Naive thymus-derived CD8-positive, alpha-beta T cell (primary cell): ENCODE measurements at regions of chr10 and their contacts with region 1.

Region 1: DNA sequence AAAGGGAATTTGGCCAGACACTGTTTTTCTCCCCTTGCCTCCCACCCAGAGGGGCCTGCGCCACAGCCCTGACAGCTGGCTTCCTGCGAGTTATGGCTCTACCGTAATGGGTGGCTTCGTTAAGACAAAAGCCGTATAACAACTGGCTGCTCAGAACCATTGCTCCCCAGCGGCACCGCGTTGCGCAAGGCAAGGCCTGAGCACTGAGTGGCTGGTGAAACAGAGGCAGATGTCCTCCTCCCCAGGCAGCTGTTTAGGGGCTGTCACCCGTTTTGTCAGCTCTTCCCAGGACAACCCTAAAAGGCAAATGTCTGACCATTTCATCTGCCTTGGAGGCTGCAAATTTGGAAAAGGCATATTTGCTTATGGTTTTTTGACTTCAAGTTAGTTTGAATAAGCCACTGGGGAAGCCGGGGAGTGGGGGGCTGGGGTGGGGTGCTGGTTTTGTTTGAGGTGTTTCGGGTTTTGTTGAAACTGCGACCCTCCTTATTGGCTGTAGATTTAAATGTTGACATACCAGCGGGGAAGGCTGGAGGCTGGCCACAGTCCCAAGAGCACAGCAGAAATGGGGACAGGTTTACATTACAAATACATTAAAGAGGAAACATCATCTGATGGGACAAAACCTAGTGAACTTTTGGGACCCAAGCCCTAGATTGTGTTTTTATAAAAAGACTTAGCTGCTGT is 681 bp upstream of the SPOCK2 start:
- DNase-seq: peak in 7 of 10 donors; percentile 44 to 82 (median 62)
- ATAC-seq: peak; percentile 49 to 54
- H3K4me3 Mint-ChIP-seq: peak overlapping the region; percentile 93 to 100 (median 100)
- H3K27ac Mint-ChIP-seq: peak overlapping the region; percentile 97 to 100 (median 100)
- H3K4me1 Mint-ChIP-seq: peaks cover 31 to 55% (median 46%) of the 10 kb centered on the region in 4 donors
- H3K27me3 Mint-ChIP-seq: peaks cover 0 to 3% (median 0%) of the 10 kb centered on the region in 5 donors

Region 2: DNA sequence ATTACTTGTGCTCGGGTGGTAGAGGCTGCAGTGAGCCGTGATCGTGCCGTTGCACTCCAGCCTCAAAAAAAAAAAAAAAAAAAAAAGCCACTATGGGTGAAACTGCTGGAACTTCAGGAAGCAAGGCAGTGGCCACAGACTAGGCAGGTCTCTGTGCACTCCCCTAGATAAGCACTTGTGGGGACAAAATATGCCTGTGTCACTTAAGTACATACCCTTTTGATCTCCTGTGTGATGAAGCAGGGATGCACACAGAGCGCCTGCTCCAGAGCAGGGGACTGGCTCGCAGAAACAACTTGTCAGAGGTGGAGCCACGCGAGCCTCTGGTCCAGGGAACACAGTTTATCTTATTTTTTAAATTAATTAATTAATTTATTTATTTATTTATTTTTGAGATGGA is 195.1 kb before region 1 on chr10:
- POLR2A ChIA-PET with region 1: no interaction called
- DNase-seq: no peak
- ATAC-seq: no peak
- H3K4me3 Mint-ChIP-seq: no peak overlapping the region
- H3K27ac Mint-ChIP-seq: no peak overlapping the region
- H3K4me1 Mint-ChIP-seq: peaks cover 6 to 18% (median 16%) of the 10 kb centered on the region in 4 donors
- H3K27me3 Mint-ChIP-seq: peaks cover 0 to 5% (median 2%) of the 10 kb centered on the region in 5 donors

Region 3: DNA sequence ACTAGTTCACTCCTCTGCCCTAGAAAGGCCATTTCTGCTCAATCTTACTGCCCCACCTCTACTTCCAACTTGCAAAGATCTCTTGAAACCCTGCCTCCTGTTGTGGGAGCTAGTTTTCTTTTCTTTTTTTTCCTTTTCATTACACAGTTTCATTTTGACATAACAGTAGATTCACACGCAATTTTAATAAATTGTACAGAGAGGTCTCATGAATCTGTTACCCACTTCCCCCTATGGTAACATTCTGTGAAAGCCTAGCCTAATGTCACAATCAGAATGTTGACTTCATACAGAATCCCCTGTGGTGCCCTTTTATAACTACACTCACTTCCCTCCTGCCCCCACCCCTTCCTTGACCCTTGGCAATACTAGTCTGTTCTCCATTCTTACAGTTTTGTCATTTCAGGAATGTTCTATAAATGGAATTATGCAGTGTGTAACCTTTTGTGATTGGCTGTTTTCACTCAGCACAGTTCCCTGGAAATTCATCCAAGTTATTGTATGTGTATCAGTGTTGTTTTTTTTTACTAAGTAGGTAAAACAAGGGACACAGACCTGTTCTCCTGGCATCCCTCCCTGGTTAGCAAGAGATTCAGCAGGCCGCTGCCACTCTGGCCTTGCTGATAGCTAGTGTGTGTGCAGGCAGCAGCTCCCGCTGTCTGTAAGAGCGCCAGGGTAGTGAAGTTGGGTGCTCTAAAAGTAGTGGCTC is 103.3 kb before region 1 on chr10:
- POLR2A ChIA-PET with region 1: no interaction called
- DNase-seq: no peak
- ATAC-seq: no peak
- H3K4me3 Mint-ChIP-seq: no peak overlapping the region
- H3K27ac Mint-ChIP-seq: peak overlapping the region in 1 of 10 donors; percentile 23
- H3K4me1 Mint-ChIP-seq: peaks cover 0 to 11% (median 2%) of the 10 kb centered on the region in 4 donors
- H3K27me3 Mint-ChIP-seq: peaks cover 0 to 3% (median 0%) of the 10 kb centered on the region in 5 donors

Region 4: DNA sequence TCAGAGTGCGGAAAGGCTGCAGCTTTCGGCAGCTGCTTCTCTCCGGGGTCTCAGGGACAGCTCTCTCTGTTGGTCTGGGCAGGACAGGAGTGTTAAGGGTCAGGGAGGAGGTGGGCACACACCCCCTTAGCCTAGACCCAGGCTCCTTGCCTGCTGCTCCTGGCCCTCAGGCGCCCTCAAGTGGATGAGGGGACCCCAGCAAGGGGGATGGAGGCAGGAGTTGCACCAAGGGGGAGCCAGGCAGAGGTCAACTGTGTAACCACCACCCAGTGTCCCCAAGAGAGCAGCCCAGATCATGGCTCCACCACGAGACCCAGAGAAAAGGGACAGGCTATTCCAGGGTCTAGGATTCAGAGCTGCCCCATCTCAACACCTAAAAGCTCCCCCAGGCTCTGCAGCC is 27.5 kb before region 1 on chr10:
- POLR2A ChIA-PET with region 1: interaction called, 32 read pairs
- DNase-seq: peak in 2 of 10 donors; percentile 9 to 38
- ATAC-seq: peak; percentile 12 to 22
- H3K4me3 Mint-ChIP-seq: peak overlapping the region in 6 of 10 donors; percentile 23 to 75 (median 39)
- H3K27ac Mint-ChIP-seq: peak overlapping the region; percentile 76 to 98 (median 83)
- H3K4me1 Mint-ChIP-seq: peaks cover 34 to 68% (median 44%) of the 10 kb centered on the region in 4 donors
- H3K27me3 Mint-ChIP-seq: no peaks in the 10 kb centered on the region

Region 5: GRCh38 chr10:72107325-72108003 is 18.4 kb after region 1 on chr10:
- POLR2A ChIA-PET with region 1: interaction called, 208 read pairs
- DNase-seq: peak in 6 of 10 donors; percentile 37 to 76 (median 68)
- ATAC-seq: peak; percentile 66 to 90
- H3K4me3 Mint-ChIP-seq: peak overlapping the region; percentile 60 to 87 (median 75)
- H3K27ac Mint-ChIP-seq: peak overlapping the region; percentile 81 to 95 (median 90)
- H3K4me1 Mint-ChIP-seq: peaks cover 51 to 91% (median 88%) of the 10 kb centered on the region in 4 donors
- H3K27me3 Mint-ChIP-seq: no peaks in the 10 kb centered on the region

Region 6: DNA sequence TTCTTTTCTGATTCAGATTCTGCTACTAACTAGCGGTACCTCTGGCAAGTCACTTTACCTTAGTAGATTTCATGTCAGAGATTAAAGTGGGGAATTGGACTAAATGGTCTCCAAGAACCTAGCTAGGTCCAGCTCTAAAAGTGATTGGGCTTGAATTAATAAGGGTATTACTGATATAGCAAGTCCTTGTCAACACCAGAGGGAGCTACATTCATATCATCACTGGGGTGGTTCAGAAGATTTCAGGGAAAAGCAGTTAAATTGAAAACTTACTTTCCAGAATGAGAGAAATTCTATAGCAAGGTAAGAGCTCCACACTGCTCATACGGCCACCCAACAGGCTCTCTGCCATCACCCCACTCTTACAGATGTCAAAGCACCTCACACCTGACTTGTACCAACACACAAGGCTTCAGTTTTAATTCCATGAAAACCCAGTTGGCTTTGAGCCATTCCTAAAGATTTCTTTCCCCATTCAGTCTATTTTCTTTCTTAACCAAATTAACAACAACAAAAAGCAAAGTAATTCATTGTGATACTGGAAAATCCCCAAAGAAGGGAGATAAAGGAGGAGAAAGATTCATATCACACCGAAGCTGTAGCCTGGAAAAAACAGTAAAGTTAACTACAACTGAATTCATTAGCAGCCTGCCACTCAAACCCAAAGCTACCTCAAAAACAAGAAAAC is 37.3 kb after region 1 on chr10:
- POLR2A ChIA-PET with region 1: interaction called, 33 read pairs
- DNase-seq: no peak
- ATAC-seq: no peak
- H3K4me3 Mint-ChIP-seq: no peak overlapping the region
- H3K27ac Mint-ChIP-seq: peak overlapping the region in 7 of 10 donors; percentile 3 to 68 (median 28)
- H3K4me1 Mint-ChIP-seq: peaks cover 18 to 37% (median 33%) of the 10 kb centered on the region in 4 donors
- H3K27me3 Mint-ChIP-seq: no peaks in the 10 kb centered on the region

Region 7: DNA sequence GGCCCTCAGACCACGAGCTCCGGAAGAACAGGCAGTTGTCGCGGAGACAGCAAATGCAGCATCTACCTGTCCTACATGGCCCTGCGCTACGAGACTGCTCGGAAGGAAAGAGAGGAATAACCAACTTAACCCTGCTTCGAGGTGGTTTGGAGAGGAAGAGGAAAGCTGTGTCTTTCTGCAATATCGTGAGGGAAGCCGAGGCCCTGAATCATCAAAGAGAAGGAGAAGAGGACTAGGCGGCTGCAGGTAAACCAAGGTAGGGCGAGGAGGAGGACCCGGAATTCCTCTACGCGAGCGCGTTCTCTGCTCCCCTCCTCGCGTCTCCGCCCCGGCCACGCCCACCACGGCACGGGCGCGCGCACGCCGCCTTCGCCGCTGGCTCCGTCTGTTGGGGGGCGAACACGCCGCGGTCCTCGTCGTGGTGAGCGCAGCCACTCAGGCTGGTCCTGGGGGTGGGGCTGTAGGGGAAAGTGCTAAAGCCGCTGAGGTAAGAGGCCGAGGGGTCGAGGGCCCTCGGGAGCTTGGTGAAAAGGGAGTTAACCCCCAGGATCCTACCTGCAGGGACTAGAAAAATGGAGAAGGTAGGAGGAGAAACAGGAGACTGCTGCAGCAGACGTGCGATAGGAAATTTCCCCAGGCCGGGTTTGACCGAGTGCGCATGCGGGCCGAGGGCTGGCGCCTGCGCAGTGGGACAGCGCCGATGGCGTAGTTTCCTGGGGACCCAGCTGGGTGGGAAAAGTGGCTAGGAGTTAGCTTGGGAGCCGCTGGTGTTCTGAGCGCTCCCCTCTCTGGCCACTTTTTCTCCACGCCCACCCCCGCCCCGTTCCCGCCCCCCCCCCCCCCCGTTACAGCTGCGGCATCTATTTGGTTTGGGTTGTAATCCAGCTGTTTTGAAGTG is 126.9 kb after region 1 on chr10 and contains the starts of genes ANAPC16 and ASCC1:
- POLR2A ChIA-PET with region 1: interaction called, 74 read pairs
- DNase-seq: peak; percentile 88 to 99 (median 96)
- ATAC-seq: peak; percentile 79 to 81
- H3K4me3 Mint-ChIP-seq: peak within 1 kb of the TSS; percentile 91 to 100 (median 98)
- H3K27ac Mint-ChIP-seq: peak within 1 kb of the TSS; percentile 94 to 100 (median 99)
- H3K4me1 Mint-ChIP-seq: peaks cover 17 to 67% (median 51%) of the 10 kb centered on the region in 4 donors
- H3K27me3 Mint-ChIP-seq: no peaks in the 10 kb centered on the region
- polyA plus RNA-seq, gene ANAPC16: 419 to 453 (median 444) TPM
- polyA plus RNA-seq, gene ASCC1: 21.2 to 44.4 (median 31.4) TPM

Region 8: GRCh38 chr10:72297968-72298773 is 209.1 kb after region 1 on chr10:
- POLR2A ChIA-PET with region 1: interaction called, 10 read pairs
- DNase-seq: peak; percentile 51 to 90 (median 78)
- ATAC-seq: peak; percentile 51
- H3K4me3 Mint-ChIP-seq: peak overlapping the region; percentile 39 to 89 (median 82)
- H3K27ac Mint-ChIP-seq: peak overlapping the region; percentile 43 to 100 (median 97)
- H3K4me1 Mint-ChIP-seq: peaks cover 25 to 63% (median 58%) of the 10 kb centered on the region in 4 donors
- H3K27me3 Mint-ChIP-seq: peaks cover 0 to 2% (median 0%) of the 10 kb centered on the region in 5 donors

Region 9: DNA sequence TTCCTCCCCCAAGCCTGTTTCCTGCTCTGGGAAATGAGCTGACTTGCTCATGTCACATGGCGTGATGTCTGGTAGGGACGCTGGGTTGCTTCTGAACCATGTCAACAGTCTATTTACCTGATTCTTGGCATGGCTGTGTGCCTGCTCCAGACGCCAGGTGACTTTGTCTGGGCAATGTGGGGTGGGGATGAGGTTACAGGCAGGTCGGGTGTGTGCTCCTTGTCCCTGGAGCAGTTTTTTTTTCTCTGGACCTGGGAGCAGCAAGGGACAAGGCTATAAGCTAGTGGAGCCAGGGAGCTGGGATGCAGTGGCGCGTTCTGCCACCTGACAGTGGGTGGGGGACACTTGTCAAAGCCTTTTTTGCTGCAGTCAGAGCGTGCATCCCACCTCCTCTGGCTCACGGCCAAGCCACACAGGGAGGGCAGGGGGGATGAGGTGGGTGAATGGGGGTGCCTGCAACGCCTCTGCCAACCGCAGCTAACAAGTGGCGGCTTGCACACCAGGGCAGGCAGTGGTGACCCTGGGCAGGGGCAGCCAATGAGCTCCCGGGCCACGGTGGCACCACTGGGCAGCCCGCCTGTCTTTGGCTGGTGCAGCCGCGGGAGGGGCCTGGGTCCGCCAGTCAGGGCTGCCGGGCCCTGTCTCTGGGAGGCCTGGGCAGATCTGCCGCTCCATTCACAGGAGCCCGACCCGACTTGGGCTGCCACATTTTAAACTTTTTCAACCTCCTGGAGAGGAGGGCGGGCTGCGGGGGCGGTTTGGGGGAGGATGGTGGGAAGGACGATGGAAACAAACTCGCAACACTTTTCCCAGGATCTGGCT is 242.8 kb after region 1 on chr10:
- POLR2A ChIA-PET with region 1: interaction called, 16 read pairs
- DNase-seq: peak; percentile 82 to 99 (median 96)
- ATAC-seq: peak; percentile 74 to 77
- H3K4me3 Mint-ChIP-seq: peak overlapping the region; percentile 72 to 90 (median 84)
- H3K27ac Mint-ChIP-seq: peak overlapping the region; percentile 92 to 99 (median 98)
- H3K4me1 Mint-ChIP-seq: peaks cover 39 to 97% (median 93%) of the 10 kb centered on the region in 4 donors
- H3K27me3 Mint-ChIP-seq: no peaks in the 10 kb centered on the region

Region 10: GRCh38 chr10:73209705-73210104 is 1120.7 kb after region 1 on chr10:
- POLR2A ChIA-PET with region 1: no interaction called
- DNase-seq: no peak
- ATAC-seq: no peak
- H3K4me3 Mint-ChIP-seq: no peak overlapping the region
- H3K27ac Mint-ChIP-seq: no peak overlapping the region
- H3K4me1 Mint-ChIP-seq: peaks cover 0 to 3% (median under 1%) of the 10 kb centered on the region in 4 donors
- H3K27me3 Mint-ChIP-seq: no peaks in the 10 kb centered on the region